ENCODE measurements at regions of chr9 and their contacts with region 1.

Region 1: GRCh38 chr9:136849038-136849959 is at the start of gene PHPT1:
- DNase-seq: peak; percentile 94 to 99
- H3K4me3 ChIP-seq: peak within 1 kb of the TSS; percentile 85 to 98
- H3K27ac ChIP-seq: peak within 1 kb of the TSS; percentile 93 to 95
- H3K4me1 ChIP-seq: peaks cover 8 to 21% of the 10 kb centered on the region in 2 donors
- H3K27me3 ChIP-seq: peaks cover 23% of the 10 kb centered on the region
- CTCF ChIP-seq: no peak
- total RNA-seq, gene PHPT1: 108 TPM

Region 2: GRCh38 chr9:136807281-136808074 is 41.8 kb before region 1 on chr9 and contains the start of gene RABL6:
- intact Hi-C with region 1: loop called (anchors 5 kb)
- DNase-seq: peak in 1 of 2 donors; percentile 83
- H3K4me3 ChIP-seq: peak within 1 kb of the TSS; percentile 97 to 100
- H3K27ac ChIP-seq: peak within 1 kb of the TSS; percentile 66 to 86
- H3K4me1 ChIP-seq: peaks cover 15 to 23% of the 10 kb centered on the region in 2 donors
- H3K27me3 ChIP-seq: no peaks in the 10 kb centered on the region
- CTCF ChIP-seq: peak in 1 of 3 experiments; percentile 10
- total RNA-seq, gene RABL6: 70.9 TPM

Region 3: GRCh38 chr9:136865735-136866103 is 16.4 kb after region 1 on chr9:
- intact Hi-C with region 1: loop called (anchors 1 kb)
- DNase-seq: no peak
- H3K4me3 ChIP-seq: peak overlapping the region; percentile 81 to 97
- H3K27ac ChIP-seq: peak overlapping the region; percentile 86 to 91
- H3K4me1 ChIP-seq: peaks cover 5 to 15% of the 10 kb centered on the region in 2 donors
- H3K27me3 ChIP-seq: no peaks in the 10 kb centered on the region
- CTCF ChIP-seq: no peak

Region 4: GRCh38 chr9:136885950-136886578 is 36.8 kb after region 1 on chr9 and contains the start of gene TRAF2:
- intact Hi-C with region 1: loop called (anchors 1 kb)
- DNase-seq: peak; percentile 88 to 98
- H3K4me3 ChIP-seq: peak within 1 kb of the TSS; percentile 89 to 96
- H3K27ac ChIP-seq: peak within 1 kb of the TSS; percentile 76 to 78
- H3K4me1 ChIP-seq: peaks cover 0 to 8% of the 10 kb centered on the region in 2 donors
- H3K27me3 ChIP-seq: no peaks in the 10 kb centered on the region
- CTCF ChIP-seq: peak in 1 of 3 experiments; percentile 30
- total RNA-seq, gene TRAF2: 4.4 TPM

Region 5: DNA sequence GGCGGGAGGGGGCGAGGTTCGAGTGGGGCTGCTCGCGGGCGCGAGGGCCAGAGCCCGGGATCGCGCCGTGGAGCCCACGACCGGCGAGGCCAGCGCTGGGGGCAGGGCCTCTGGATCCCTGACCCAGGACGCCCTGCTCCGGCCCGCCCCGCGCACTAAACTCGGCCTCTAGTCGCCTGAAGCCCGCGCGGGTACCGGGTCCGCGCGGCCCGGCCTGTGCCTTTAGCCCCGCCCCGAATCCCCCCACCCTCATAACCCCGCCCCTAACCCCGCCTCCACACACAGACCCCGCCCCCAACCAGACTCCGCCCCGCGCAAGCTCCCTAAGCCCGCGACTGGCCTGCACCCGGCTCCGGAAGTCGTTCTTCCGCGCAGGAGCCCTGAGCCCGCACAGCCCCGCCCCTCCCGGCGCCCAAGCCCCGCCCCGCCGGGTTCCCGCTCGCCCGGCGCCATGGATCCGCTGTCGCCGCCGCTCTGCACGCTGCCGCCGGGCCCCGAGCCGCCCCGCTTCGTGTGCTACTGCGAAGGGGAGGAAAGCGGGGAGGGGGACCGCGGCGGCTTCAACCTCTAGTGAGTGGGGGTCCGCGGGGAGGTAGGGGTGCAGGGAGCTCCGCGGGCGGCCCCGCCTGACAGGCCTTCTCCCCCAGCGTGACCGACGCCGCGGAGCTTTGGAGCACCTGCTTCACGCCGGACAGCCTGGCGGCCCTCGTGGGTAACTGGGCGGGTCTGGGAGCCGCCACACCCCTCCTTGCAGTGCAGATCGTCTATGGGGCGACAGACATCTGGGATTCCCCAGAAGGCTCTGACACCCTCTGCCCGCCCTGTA is 142.9 kb after region 1 on chr9 and contains the start of gene PAXX:
- intact Hi-C with region 1: loop called (anchors 1 kb)
- DNase-seq: peak; percentile 57 to 93
- H3K4me3 ChIP-seq: peak within 1 kb of the TSS; percentile 79 to 85
- H3K27ac ChIP-seq: peak within 1 kb of the TSS; percentile 66 to 83
- H3K4me1 ChIP-seq: peaks cover 21 to 29% of the 10 kb centered on the region in 2 donors
- H3K27me3 ChIP-seq: no peaks in the 10 kb centered on the region
- CTCF ChIP-seq: no peak
- total RNA-seq, gene PAXX: 87.0 TPM

Region 6: GRCh38 chr9:137029058-137029936 is 180.0 kb after region 1 on chr9:
- intact Hi-C with region 1: loop called (anchors 2 kb)
- DNase-seq: peak in 1 of 2 donors; percentile 87
- H3K4me3 ChIP-seq: peak overlapping the region; percentile 71 to 94
- H3K27ac ChIP-seq: no peak overlapping the region
- H3K4me1 ChIP-seq: peaks cover 17% of the 10 kb centered on the region in 2 donors
- H3K27me3 ChIP-seq: no peaks in the 10 kb centered on the region
- CTCF ChIP-seq: peak; percentile 68 to 88 (median 86)